ENCODE measurements at regions of chr10 and their contacts with region 1.

Region 1: DNA sequence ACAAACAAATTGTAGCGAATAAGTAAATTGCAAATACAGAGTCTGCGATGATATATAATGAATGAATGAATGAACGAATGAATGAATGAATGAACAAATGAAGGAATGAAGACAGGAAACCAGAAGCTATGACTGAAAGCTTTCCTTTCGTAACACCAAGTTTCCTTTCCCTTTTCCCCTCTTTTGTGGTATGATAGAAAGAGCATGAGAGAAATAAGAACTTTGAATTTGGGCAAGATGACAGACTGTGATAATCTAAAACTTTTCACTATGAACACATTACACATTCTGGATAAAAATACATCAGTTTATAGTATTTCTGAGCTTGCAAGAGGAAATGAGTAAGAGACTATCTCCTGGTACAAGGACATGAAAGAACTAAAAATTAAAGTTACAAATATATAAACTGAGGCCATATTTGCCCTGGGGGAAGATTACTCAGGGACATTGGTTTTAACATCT is 8.4 kb upstream of the UCN3 start:
- DNase-seq: no peak
- H3K4me3 Mint-ChIP-seq: no peak overlapping the region
- H3K27ac Mint-ChIP-seq: peak overlapping the region; percentile 43
- H3K4me1 Mint-ChIP-seq: peaks cover 24% of the 10 kb centered on the region
- H3K27me3 Mint-ChIP-seq: no peaks in the 10 kb centered on the region

Region 2: GRCh38 chr10:5317547-5318107 is 38.7 kb before region 1 on chr10:
- CTCF ChIA-PET with region 1: no interaction called
- intact Hi-C with region 1: loop called (anchors 1 kb)
- DNase-seq: peak; percentile 96
- H3K4me3 Mint-ChIP-seq: peak overlapping the region; percentile 28
- H3K27ac Mint-ChIP-seq: peak overlapping the region; percentile 89
- H3K4me1 Mint-ChIP-seq: peaks cover 73% of the 10 kb centered on the region
- H3K27me3 Mint-ChIP-seq: no peaks in the 10 kb centered on the region

Region 3: DNA sequence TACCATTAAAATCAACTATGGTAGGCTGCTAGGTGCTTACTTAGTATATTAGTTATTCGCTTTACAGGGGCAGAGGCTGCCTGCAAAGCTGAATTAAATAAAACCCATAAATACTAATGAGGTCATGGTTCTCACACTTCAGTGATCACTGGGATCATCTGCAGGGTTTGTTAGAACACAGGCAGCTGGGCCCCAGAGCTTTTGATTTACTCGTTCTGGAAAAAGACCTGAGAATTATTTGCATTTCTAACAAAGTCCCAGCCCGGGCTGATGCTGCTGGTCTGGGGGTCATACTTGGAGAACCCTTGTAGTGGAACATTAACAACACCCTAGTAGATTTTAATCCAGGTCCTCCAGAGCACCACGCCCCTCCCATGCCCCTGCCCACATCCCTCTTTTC is 17.0 kb after region 1 on chr10:
- CTCF ChIA-PET with region 1: no interaction called
- intact Hi-C with region 1: no loop called
- DNase-seq: no peak
- H3K4me3 Mint-ChIP-seq: no peak overlapping the region
- H3K27ac Mint-ChIP-seq: no peak overlapping the region
- H3K4me1 Mint-ChIP-seq: no peaks in the 10 kb centered on the region
- H3K27me3 Mint-ChIP-seq: peaks cover 3% of the 10 kb centered on the region

Region 4: DNA sequence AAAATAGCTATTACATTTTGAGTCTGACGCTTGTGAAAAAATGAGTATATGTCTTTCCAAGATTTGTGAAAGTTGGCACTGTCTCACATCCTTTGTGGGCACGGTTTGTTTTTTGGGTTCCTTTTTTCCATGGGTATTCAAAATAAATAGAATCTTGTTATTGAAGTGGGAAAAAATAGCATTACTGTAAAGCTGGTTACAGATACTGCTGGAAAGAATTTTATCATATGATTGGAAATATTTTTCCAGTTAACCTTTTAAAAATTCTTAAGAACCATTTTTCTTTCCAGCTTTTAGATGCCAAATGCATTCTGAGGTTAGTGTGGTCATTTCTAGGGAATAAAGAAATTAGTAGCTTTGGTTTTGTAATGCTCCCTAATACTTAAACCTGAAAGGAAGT is 67.4 kb after region 1 on chr10:
- CTCF ChIA-PET with region 1: no interaction called
- intact Hi-C with region 1: no loop called
- DNase-seq: no peak
- H3K4me3 Mint-ChIP-seq: no peak overlapping the region
- H3K27ac Mint-ChIP-seq: no peak overlapping the region
- H3K4me1 Mint-ChIP-seq: peaks cover 6% of the 10 kb centered on the region
- H3K27me3 Mint-ChIP-seq: no peaks in the 10 kb centered on the region